ENCODE measurements at regions of chr5 and their contacts with region 1.

Region 1: GRCh38 chr5:149228618-149229297 is 42.9 kb upstream of the AFAP1L1 start:
- DNase-seq: peak; percentile 92
- ATAC-seq: peak; percentile 96
- H3K4me3 ChIP-seq: no peak overlapping the region
- H3K27ac ChIP-seq: peak overlapping the region; percentile 31; the same call in 1 of the 2 replicates
- H3K4me1 ChIP-seq: peaks cover 8% of the 10 kb centered on the region
- H3K27me3 ChIP-seq: no peaks in the 10 kb centered on the region
- CTCF ChIP-seq: peak; percentile 98
- POLR2A ChIP-seq: peak; percentile 41; the same call in 1 of the 2 replicates
- RAD21 ChIP-seq: peak; percentile 99

Region 2: GRCh38 chr5:148443998-148444397 is 784.8 kb before region 1 on chr5:
- CTCF ChIA-PET with region 1: no interaction called
- POLR2A ChIA-PET with region 1: no interaction called
- dilution Hi-C with region 1: no loop called
- in situ Hi-C with region 1: loop called (anchors 25 kb)
- intact Hi-C with region 1: no loop called
- DNase-seq: peak; percentile 78
- ATAC-seq: peak; percentile 89
- H3K4me3 ChIP-seq: no peak overlapping the region
- H3K27ac ChIP-seq: no peak overlapping the region
- H3K4me1 ChIP-seq: no peaks in the 10 kb centered on the region
- H3K27me3 ChIP-seq: peaks cover 3% of the 10 kb centered on the region; the same call in 1 of the 2 replicates
- CTCF ChIP-seq: peak; percentile 77
- POLR2A ChIP-seq: no peak
- RAD21 ChIP-seq: peak; percentile 68

Region 3: DNA sequence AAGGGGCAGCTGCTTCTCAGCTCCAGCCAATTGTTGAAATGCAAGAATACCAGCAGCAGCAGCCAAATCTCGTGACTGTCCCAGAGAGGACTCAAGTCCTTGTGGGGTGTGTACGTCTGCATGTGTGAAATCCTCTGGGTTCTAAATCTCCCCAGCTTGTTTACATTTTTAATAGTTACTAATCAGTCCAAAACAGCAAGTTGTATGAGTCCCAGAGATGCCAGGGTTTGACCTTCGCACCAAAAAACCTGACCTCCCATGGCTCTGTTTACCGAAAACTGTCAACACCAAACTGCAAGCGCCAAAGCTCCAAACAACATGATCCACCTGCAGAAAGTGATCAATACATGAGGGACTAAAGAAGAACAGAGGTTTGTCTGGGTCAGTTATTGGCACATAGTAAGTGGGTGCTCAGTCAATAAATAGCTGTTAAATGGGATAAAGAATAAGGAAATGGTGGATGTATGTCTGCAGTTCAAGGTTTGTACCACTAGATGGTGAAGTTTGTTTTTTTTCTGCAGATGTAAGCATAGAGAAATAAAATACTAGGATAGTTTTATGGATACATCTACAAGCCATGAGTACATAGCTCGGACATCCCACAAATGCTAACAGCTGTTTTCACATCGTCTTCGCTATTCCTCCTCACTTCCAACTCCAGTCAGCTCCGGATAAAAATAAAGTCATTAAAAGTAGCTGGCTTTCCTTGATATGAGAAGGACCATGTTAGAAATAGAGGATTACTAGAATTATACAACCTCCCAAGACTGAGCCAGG is 487.6 kb before region 1 on chr5:
- CTCF ChIA-PET with region 1: interaction called, 4 read pairs
- POLR2A ChIA-PET with region 1: no interaction called
- dilution Hi-C with region 1: no loop called
- in situ Hi-C with region 1: loop called (anchors 10 kb)
- intact Hi-C with region 1: loop called (anchors 5 kb)
- DNase-seq: peak; percentile 85
- ATAC-seq: peak; percentile 95
- H3K4me3 ChIP-seq: no peak overlapping the region
- H3K27ac ChIP-seq: no peak overlapping the region
- H3K4me1 ChIP-seq: no peaks in the 10 kb centered on the region
- H3K27me3 ChIP-seq: no peaks in the 10 kb centered on the region
- CTCF ChIP-seq: peak; percentile 85
- POLR2A ChIP-seq: no peak
- RAD21 ChIP-seq: peak; percentile 77

Region 4: DNA sequence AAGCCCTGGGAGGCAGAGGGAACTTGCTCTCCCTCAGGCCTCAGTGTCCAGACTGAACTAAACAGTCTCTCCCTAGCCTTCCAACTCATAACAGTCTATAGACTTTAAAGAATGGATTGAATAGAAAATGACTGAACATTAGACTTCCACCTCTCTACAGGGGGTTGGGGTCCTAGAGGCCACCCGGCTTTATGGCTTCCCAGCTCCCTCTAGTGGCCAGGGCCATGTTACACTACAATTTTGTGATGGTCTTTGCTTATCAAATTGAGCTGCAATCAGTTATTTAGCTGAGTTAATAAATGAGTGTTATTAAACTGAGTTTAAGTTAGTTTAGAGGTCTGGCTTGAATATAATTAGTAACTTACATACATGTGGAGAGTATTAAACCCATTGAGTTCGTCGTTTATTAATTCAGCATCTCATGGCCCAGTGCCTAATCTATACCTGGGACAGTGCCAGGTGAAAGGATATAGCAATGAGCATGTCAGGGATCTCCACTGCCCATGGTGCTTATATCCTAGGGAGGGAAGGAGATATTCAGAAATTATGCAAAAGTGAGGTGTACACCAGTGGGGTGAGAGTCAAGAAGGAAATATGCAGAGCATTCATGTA is 271.1 kb before region 1 on chr5:
- CTCF ChIA-PET with region 1: no interaction called
- POLR2A ChIA-PET with region 1: no interaction called
- dilution Hi-C with region 1: no loop called
- in situ Hi-C with region 1: no loop called
- intact Hi-C with region 1: no loop called
- DNase-seq: peak; percentile 43
- ATAC-seq: peak; percentile 73
- H3K4me3 ChIP-seq: no peak overlapping the region
- H3K27ac ChIP-seq: no peak overlapping the region
- H3K4me1 ChIP-seq: no peaks in the 10 kb centered on the region
- H3K27me3 ChIP-seq: no peaks in the 10 kb centered on the region
- CTCF ChIP-seq: peak; percentile 83
- POLR2A ChIP-seq: no peak
- RAD21 ChIP-seq: peak; percentile 86

Region 5: GRCh38 chr5:148998174-148998797 is 230.5 kb before region 1 on chr5:
- CTCF ChIA-PET with region 1: interaction called, 3 read pairs
- POLR2A ChIA-PET with region 1: no interaction called
- dilution Hi-C with region 1: no loop called
- in situ Hi-C with region 1: no loop called
- intact Hi-C with region 1: loop called (anchors 2 kb)
- DNase-seq: peak; percentile 75
- ATAC-seq: peak; percentile 30; the same call in 1 of the 2 replicates
- H3K4me3 ChIP-seq: no peak overlapping the region
- H3K27ac ChIP-seq: no peak overlapping the region
- H3K4me1 ChIP-seq: peaks cover 11% of the 10 kb centered on the region
- H3K27me3 ChIP-seq: no peaks in the 10 kb centered on the region
- CTCF ChIP-seq: peak; percentile 73
- POLR2A ChIP-seq: no peak
- RAD21 ChIP-seq: peak; percentile 82

Region 6: GRCh38 chr5:149063017-149063687 is 165.6 kb before region 1 on chr5 and contains the start of gene SH3TC2:
- CTCF ChIA-PET with region 1: no interaction called
- POLR2A ChIA-PET with region 1: no interaction called
- dilution Hi-C with region 1: no loop called
- in situ Hi-C with region 1: no loop called
- intact Hi-C with region 1: loop called (anchors 5 kb)
- DNase-seq: peak; percentile 61
- ATAC-seq: peak; percentile 95
- H3K4me3 ChIP-seq: no peak within 1 kb of the TSS
- H3K27ac ChIP-seq: peak within 1 kb of the TSS; percentile 77
- H3K4me1 ChIP-seq: peaks cover 24% of the 10 kb centered on the region
- H3K27me3 ChIP-seq: no peaks in the 10 kb centered on the region
- CTCF ChIP-seq: no peak
- POLR2A ChIP-seq: no peak
- RAD21 ChIP-seq: no peak
- total RNA-seq, gene SH3TC2: 7.8 and 7.9 TPM in 2 replicates

Region 7: DNA sequence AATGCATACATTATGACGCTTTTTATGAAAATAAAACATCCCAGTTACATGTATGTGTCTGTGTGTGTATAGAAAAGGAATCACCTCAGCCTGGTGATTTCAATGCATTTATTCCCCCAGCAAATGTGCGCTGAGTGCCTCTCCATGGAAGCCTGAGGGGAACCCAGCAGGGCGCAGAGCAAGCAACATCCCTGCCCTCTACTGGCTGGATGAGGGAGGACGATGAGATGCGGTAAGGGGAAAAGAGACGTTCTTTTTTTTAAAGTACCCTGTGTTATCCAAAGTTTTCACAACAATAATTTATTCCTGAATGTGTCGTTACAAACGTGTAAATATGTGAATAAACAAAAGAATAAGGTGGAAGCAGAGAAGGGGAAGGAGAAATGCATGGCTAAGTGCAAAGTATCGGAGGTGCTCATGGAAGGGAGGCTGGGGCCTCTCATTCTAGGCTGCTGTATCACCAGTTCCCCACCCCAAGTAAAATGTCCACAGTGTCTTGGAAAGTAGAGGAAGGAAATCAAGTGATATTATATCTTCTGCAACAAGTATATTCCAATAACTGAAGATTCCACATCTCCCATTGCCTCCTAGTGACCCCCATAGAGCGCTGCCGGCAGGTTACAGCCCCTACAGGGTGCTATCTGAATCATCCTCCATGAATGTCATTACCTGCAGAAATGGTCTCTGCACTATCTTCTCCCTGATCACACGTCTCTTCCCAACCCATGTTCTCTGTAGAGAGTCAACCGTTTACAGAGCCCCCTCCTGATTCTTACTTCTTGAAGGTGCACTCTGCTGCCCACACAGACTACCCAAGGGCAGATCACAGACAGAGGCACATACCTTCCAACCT is 100.5 kb before region 1 on chr5:
- CTCF ChIA-PET with region 1: interaction called, 11 read pairs
- POLR2A ChIA-PET with region 1: no interaction called
- dilution Hi-C with region 1: no loop called
- in situ Hi-C with region 1: no loop called
- intact Hi-C with region 1: loop called (anchors 1 kb)
- DNase-seq: peak; percentile 41
- ATAC-seq: peak; percentile 80
- H3K4me3 ChIP-seq: no peak overlapping the region
- H3K27ac ChIP-seq: no peak overlapping the region
- H3K4me1 ChIP-seq: peaks cover 10% of the 10 kb centered on the region
- H3K27me3 ChIP-seq: no peaks in the 10 kb centered on the region
- CTCF ChIP-seq: peak; percentile 65
- POLR2A ChIP-seq: no peak
- RAD21 ChIP-seq: peak; percentile 51

Region 8: DNA sequence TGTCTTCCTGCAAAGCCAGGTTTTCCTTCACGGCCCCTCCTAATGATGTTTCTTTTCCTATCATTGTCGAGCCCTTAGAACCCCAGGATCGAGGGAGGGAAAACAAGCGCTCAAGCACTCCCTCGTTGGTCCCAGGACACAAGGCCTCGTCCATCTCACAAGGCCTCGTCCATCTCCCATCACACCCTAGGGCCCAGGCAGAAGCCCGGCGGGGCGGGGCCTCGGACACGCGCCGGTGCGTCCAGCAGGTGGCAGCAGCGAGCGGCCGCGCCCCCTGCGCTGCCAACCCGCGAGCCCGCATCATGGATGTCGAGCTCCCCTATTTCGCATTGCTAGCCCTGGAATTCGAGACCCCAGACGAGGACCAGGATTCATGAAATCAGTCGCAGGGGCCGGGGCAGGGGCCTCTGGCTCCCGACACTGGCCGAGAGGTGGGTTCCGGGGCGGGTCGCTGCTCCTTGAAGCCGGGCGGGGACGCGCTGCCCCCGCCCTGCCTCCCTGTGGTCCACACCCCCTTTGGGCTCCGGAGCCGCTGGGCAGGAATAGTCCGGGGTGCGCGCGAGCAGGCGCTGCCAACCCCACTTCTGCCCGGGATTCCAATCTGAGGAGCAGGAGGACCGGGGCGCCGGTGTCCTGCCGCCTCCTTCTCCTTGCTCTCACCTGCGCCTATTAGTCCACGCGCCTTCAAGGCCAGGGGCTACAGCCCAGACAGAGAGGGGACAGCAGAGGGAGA is 87.4 kb before region 1 on chr5 and contains the start of gene ABLIM3:
- CTCF ChIA-PET with region 1: interaction called, 6 read pairs
- POLR2A ChIA-PET with region 1: no interaction called
- dilution Hi-C with region 1: no loop called
- in situ Hi-C with region 1: no loop called
- intact Hi-C with region 1: loop called (anchors 1 kb)
- DNase-seq: peak; percentile 55
- ATAC-seq: peak; percentile 84
- H3K4me3 ChIP-seq: peak within 1 kb of the TSS; percentile 70
- H3K27ac ChIP-seq: peak within 1 kb of the TSS; percentile 67
- H3K4me1 ChIP-seq: peaks cover 11% of the 10 kb centered on the region
- H3K27me3 ChIP-seq: no peaks in the 10 kb centered on the region
- CTCF ChIP-seq: peak; percentile 95
- POLR2A ChIP-seq: peak; percentile 72
- RAD21 ChIP-seq: peak; percentile 81
- total RNA-seq, gene ABLIM3: 33.3 and 34.2 TPM in 2 replicates